ENCODE measurements at regions of chr5 and their contacts with region 1.

Region 1: GRCh38 chr5:141369994-141370848 is at the start of gene PCDHGB3:
- DNase-seq: peak; percentile 54
- ATAC-seq: peak; percentile 74
- H3K4me3 ChIP-seq: peak within 1 kb of the TSS in 4 of 5 experiments; percentile 23 to 55 (median 38)
- H3K4me3 Mint-ChIP-seq: peak within 1 kb of the TSS; percentile 82
- H3K27ac ChIP-seq: no peak within 1 kb of the TSS
- H3K27ac Mint-ChIP-seq: peak within 1 kb of the TSS; percentile 39
- H3K4me1 ChIP-seq: peaks cover 0 to 5% of the 10 kb centered on the region in 2 donors
- H3K4me1 Mint-ChIP-seq: peaks cover 8% of the 10 kb centered on the region
- H3K27me3 ChIP-seq: peaks cover 0 to 65% (median 39%) of the 10 kb centered on the region in 4 experiments
- H3K27me3 Mint-ChIP-seq: peaks cover 53% of the 10 kb centered on the region
- CTCF ChIP-seq: peak; percentile 38
- total RNA-seq, gene PCDHGB3: 2.8 and 3.8 TPM in 2 replicates

Region 2: DNA sequence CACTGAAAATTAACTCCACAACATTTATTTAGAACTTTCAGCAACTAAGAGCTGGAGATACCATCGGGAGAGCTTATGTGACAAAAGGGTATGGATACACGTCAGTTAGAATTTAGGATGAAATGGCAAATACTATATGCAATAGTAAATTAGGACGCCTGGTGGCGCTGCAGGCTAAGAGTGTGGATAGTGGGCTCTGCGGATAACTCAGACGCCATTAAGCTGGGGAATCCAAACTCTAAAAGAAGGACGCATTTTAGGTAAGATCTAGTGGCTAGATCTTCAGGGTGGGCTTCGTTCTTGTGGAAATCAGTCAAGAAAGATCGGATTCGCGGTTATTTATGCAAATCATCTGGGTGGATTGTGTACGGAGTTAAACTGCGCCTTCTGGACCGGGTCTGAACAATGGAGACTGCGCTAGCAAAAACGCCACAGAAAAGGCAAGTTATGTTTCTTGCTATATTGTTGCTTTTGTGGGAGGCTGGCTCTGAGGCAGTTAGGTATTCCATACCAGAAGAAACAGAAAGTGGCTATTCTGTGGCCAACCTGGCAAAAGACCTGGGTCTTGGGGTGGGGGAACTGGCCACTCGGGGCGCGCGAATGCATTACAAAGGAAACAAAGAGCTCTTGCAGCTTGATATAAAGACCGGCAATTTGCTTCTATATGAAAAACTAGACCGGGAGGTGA is 235.0 kb before region 1 on chr5 and contains the start of gene PCDHB5:
- CTCF ChIA-PET with region 1: no interaction called
- POLR2A ChIA-PET with region 1: no interaction called
- intact Hi-C with region 1: no loop called
- DNase-seq: no peak
- ATAC-seq: no peak
- H3K4me3 ChIP-seq: no peak within 1 kb of the TSS
- H3K4me3 Mint-ChIP-seq: peak within 1 kb of the TSS; percentile 29
- H3K27ac ChIP-seq: no peak within 1 kb of the TSS
- H3K27ac Mint-ChIP-seq: no peak within 1 kb of the TSS
- H3K4me1 ChIP-seq: no peaks in the 10 kb centered on the region
- H3K4me1 Mint-ChIP-seq: no peaks in the 10 kb centered on the region
- H3K27me3 ChIP-seq: peaks cover 0 to 13% (median 6%) of the 10 kb centered on the region in 4 experiments
- H3K27me3 Mint-ChIP-seq: peaks cover 6% of the 10 kb centered on the region
- CTCF ChIP-seq: no peak
- total RNA-seq, gene PCDHB5: not detected in 2 replicates

Region 3: GRCh38 chr5:141382469-141383294 is 12.5 kb after region 1 on chr5 and contains the start of gene PCDHGA7:
- CTCF ChIA-PET with region 1: no interaction called
- POLR2A ChIA-PET with region 1: no interaction called
- intact Hi-C with region 1: no loop called
- DNase-seq: no peak
- ATAC-seq: no peak
- H3K4me3 ChIP-seq: peak within 1 kb of the TSS in 3 of 5 experiments; percentile 1 to 36 (median 24)
- H3K4me3 Mint-ChIP-seq: peak within 1 kb of the TSS; percentile 81
- H3K27ac ChIP-seq: no peak within 1 kb of the TSS
- H3K27ac Mint-ChIP-seq: no peak within 1 kb of the TSS
- H3K4me1 ChIP-seq: no peaks in the 10 kb centered on the region
- H3K4me1 Mint-ChIP-seq: peaks cover 3% of the 10 kb centered on the region
- H3K27me3 ChIP-seq: peaks cover 0 to 43% (median 28%) of the 10 kb centered on the region in 4 experiments
- H3K27me3 Mint-ChIP-seq: peaks cover 58% of the 10 kb centered on the region
- CTCF ChIP-seq: no peak
- total RNA-seq, gene PCDHGA7: 1.8 and 2.3 TPM in 2 replicates

Region 4: GRCh38 chr5:141402553-141403260 is 32.5 kb after region 1 on chr5 and contains the start of gene PCDHGA9:
- CTCF ChIA-PET with region 1: interaction called, 4 read pairs
- POLR2A ChIA-PET with region 1: no interaction called
- intact Hi-C with region 1: loop called (anchors 5 kb)
- DNase-seq: peak; percentile 25
- ATAC-seq: no peak
- H3K4me3 ChIP-seq: peak within 1 kb of the TSS in 3 of 5 experiments; percentile 21 to 39 (median 21)
- H3K4me3 Mint-ChIP-seq: peak within 1 kb of the TSS; percentile 73
- H3K27ac ChIP-seq: no peak within 1 kb of the TSS
- H3K27ac Mint-ChIP-seq: no peak within 1 kb of the TSS
- H3K4me1 ChIP-seq: no peaks in the 10 kb centered on the region
- H3K4me1 Mint-ChIP-seq: peaks cover 2% of the 10 kb centered on the region
- H3K27me3 ChIP-seq: peaks cover 0 to 55% (median 35%) of the 10 kb centered on the region in 4 experiments
- H3K27me3 Mint-ChIP-seq: peaks cover 55% of the 10 kb centered on the region
- CTCF ChIP-seq: peak; percentile 42
- total RNA-seq, gene PCDHGA9: 1.9 and 2.5 TPM in 2 replicates

Region 5: GRCh38 chr5:141420855-141421496 is 50.8 kb after region 1 on chr5 and contains the start of gene PCDHGA11:
- CTCF ChIA-PET with region 1: interaction called, 14 read pairs
- POLR2A ChIA-PET with region 1: no interaction called
- intact Hi-C with region 1: no loop called
- DNase-seq: peak; percentile 68
- ATAC-seq: peak; percentile 68
- H3K4me3 ChIP-seq: peak within 1 kb of the TSS; percentile 24 to 53 (median 52)
- H3K4me3 Mint-ChIP-seq: peak within 1 kb of the TSS; percentile 87
- H3K27ac ChIP-seq: no peak within 1 kb of the TSS
- H3K27ac Mint-ChIP-seq: peak within 1 kb of the TSS; percentile 48
- H3K4me1 ChIP-seq: peaks cover 10 to 12% of the 10 kb centered on the region in 2 donors
- H3K4me1 Mint-ChIP-seq: peaks cover 15% of the 10 kb centered on the region
- H3K27me3 ChIP-seq: peaks cover 2 to 71% (median 58%) of the 10 kb centered on the region in 4 experiments
- H3K27me3 Mint-ChIP-seq: peaks cover 57% of the 10 kb centered on the region
- CTCF ChIP-seq: peak; percentile 72
- total RNA-seq, gene PCDHGA11: 1.5 and 1.8 TPM in 2 replicates